MCF 10A (cell line): ENCODE measurements at regions of chr11 and their contacts with region 1.

Region 1: DNA sequence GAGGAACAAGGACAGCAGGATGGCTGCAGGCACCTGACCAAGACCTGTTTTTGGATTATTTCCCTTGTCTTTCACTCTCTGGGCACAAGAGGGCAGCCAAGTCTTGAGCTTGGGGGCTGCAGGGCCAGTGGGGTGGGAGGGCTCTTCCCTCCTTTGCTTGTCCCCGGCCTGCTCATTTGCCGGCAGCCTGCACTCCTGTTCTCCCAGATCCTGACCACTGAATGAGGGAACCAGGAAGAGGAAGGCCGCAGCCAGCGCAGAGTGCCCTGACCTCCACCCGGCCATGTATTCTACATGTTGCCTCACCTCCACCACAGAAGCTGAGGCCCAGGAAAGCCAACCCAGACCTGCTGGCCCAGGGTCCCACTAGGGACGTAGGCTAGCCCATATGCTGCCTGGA is 15.5 kb upstream of the NNMT start:
- DNase-seq: peak; percentile 88
- H3K4me3 Mint-ChIP-seq: peak overlapping the region; percentile 35
- H3K27ac Mint-ChIP-seq: peak overlapping the region; percentile 40
- H3K4me1 Mint-ChIP-seq: peaks cover 56% of the 10 kb centered on the region
- H3K27me3 Mint-ChIP-seq: no peaks in the 10 kb centered on the region
- CTCF ChIP-seq: peak; percentile 78

Region 2: GRCh38 chr11:114307524-114308203 is 27.0 kb after region 1 on chr11:
- CTCF ChIA-PET with region 1: interaction called, 11 read pairs
- POLR2A ChIA-PET with region 1: interaction called, 28 read pairs
- intact Hi-C with region 1: no loop called
- DNase-seq: peak; percentile 93
- H3K4me3 Mint-ChIP-seq: peak overlapping the region; percentile 70
- H3K27ac Mint-ChIP-seq: peak overlapping the region; percentile 85
- H3K4me1 Mint-ChIP-seq: peaks cover 52% of the 10 kb centered on the region
- H3K27me3 Mint-ChIP-seq: no peaks in the 10 kb centered on the region
- CTCF ChIP-seq: no peak

Region 3: GRCh38 chr11:114340311-114341131 is 59.8 kb after region 1 on chr11:
- CTCF ChIA-PET with region 1: interaction called, 4 read pairs
- POLR2A ChIA-PET with region 1: no interaction called
- intact Hi-C with region 1: loop called (anchors 1 kb)
- DNase-seq: peak; percentile 74
- H3K4me3 Mint-ChIP-seq: no peak overlapping the region
- H3K27ac Mint-ChIP-seq: no peak overlapping the region
- H3K4me1 Mint-ChIP-seq: peaks cover 9% of the 10 kb centered on the region
- H3K27me3 Mint-ChIP-seq: peaks cover 13% of the 10 kb centered on the region
- CTCF ChIP-seq: peak; percentile 90

Region 4: DNA sequence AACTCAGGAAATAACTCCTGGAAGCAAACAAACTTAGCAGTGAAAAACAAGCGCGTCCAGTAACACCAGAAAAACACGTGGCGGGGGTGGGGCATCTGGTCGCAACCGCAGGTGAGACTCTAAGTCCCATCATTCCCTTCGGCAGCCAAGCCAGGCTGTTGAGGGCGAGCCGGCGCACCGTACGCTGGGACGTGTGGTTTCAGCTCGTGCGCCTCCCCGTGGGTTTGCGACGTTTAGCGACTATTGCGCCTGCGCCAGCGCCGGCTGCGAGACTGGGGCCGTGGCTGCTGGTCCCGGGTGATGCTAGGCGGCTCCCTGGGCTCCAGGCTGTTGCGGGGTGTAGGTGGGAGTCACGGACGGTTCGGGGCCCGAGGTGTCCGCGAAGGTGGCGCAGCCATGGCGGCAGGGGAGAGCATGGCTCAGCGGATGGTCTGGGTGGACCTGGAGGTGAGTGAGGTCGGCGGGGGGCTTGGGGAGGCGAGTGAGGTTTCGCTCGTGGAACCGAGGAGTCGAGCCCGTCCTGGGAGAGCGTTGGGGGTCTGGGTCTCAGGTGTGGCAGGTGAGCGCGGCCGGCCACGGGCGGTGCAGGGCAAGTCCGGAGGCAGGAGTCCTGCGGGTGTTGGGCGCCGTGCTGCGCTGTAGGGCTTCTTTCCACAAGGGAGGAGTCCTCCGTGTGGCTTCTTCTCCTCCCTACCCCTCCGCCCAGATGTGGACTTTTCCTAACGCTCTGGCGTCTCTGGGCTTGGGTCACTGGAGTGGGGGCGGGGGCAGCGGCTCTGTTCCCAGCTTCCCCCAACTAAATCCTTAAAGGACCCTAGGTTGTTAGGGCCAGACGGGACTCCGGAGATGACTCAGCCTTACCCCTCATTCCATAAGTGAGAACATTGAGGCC is 158.8 kb after region 1 on chr11 and contains the start of gene REXO2:
- CTCF ChIA-PET with region 1: no interaction called
- POLR2A ChIA-PET with region 1: no interaction called
- intact Hi-C with region 1: loop called (anchors 1 kb)
- DNase-seq: peak; percentile 96
- H3K4me3 Mint-ChIP-seq: peak within 1 kb of the TSS; percentile 99
- H3K27ac Mint-ChIP-seq: peak within 1 kb of the TSS; percentile 93
- H3K4me1 Mint-ChIP-seq: peaks cover 13% of the 10 kb centered on the region
- H3K27me3 Mint-ChIP-seq: no peaks in the 10 kb centered on the region
- CTCF ChIP-seq: peak; percentile 12
- total RNA-seq, gene REXO2: 125 and 126 TPM in 2 replicates

Region 5: DNA sequence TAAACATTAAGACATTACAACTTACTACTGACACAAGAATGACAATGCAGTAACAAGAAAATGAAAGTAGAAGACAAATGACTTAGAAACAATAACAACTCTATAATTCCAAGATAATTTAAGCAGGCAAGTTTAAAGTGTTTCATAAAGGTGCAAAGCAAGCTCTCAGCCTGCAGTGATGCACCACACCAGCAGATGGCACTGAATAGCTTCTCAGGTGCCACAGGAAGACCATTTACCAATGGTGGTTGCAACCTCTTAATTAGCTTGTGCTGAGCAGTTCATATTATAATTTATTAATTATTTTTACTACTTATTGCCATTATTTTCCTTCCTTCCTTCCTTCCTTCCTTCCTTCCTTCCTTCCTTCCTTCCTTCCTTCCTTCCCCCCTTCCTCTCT is 458.3 kb after region 1 on chr11:
- CTCF ChIA-PET with region 1: no interaction called
- POLR2A ChIA-PET with region 1: no interaction called
- intact Hi-C with region 1: loop called (anchors 5 kb)
- DNase-seq: peak; percentile 63
- H3K4me3 Mint-ChIP-seq: no peak overlapping the region
- H3K27ac Mint-ChIP-seq: no peak overlapping the region
- H3K4me1 Mint-ChIP-seq: no peaks in the 10 kb centered on the region
- H3K27me3 Mint-ChIP-seq: peaks cover 20% of the 10 kb centered on the region
- CTCF ChIP-seq: peak; percentile 76